ENCODE measurements at regions of chr5 and their contacts with region 1.

Region 1: DNA sequence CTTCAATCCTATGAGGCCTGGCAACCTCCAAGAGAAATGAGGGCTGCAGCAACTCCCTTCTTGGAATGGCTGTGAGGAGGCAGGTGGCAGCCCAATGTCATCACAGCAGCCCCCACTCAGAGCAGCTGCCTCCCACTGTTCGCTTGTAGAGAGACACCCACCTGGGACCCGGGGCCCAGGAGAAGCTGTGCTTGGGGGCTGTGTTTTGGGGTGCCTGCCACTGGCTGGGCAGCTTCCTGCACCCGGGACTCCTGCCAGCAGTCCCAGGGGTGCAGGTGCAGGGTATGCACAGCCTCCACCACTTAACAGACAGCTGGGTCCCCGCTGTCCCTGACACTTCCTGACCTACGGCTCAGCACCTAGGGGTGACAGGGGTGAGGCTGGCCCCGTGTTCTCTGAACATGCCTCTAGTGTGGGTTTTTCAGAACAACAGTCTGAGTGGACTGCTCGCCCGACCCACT is 26.2 kb downstream of the NIPAL4 start:
- DNase-seq: no peak
- ATAC-seq: peak in 1 of 8 donors; percentile 51
- H3K4me3 ChIP-seq: no peak overlapping the region
- H3K27ac ChIP-seq: no peak overlapping the region
- H3K4me1 ChIP-seq: peaks cover 0 to 12% (median 8%) of the 10 kb centered on the region in 9 donors
- H3K27me3 ChIP-seq: no peaks in the 10 kb centered on the region
- CTCF ChIP-seq: no peak

Region 2: DNA sequence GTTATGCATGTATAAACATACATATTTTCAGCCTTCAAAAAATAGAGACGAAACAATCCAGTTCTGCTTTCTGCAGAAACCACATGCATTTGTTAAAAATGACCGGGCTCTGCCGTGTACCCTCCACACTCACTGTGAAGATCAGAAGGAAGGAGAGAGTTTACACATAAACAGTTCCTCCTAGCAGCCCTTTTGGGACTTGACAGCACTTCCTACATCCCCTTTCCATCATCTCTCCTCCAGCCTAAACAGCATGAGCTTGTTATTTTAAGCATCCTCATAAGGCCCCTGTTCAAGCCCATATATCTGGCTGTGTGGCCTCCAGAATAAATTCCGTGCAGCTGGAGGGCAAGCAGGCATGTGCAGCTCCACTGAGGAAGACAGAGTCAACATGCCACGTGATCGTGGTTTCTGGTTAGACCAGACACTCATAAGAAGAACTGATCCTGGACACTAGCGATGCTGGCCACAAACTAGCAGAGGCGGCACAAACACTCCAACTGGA is 15.9 kb after region 1 on chr5:
- intact Hi-C with region 1: loop called in 1 of 10 experiments (anchors 2 kb)
- DNase-seq: no peak
- ATAC-seq: peak in 3 of 8 donors; percentile 22 to 53 (median 53)
- H3K4me3 ChIP-seq: no peak overlapping the region
- H3K27ac ChIP-seq: peak overlapping the region in 1 of 10 donors; percentile 4
- H3K4me1 ChIP-seq: peaks cover 0 to 36% (median 9%) of the 10 kb centered on the region in 9 donors
- H3K27me3 ChIP-seq: no peaks in the 10 kb centered on the region
- CTCF ChIP-seq: no peak

Measured in heart right ventricle (tissue), 16 donors.